ENCODE measurements at regions of chr5 and their contacts with region 1.

Region 1: DNA sequence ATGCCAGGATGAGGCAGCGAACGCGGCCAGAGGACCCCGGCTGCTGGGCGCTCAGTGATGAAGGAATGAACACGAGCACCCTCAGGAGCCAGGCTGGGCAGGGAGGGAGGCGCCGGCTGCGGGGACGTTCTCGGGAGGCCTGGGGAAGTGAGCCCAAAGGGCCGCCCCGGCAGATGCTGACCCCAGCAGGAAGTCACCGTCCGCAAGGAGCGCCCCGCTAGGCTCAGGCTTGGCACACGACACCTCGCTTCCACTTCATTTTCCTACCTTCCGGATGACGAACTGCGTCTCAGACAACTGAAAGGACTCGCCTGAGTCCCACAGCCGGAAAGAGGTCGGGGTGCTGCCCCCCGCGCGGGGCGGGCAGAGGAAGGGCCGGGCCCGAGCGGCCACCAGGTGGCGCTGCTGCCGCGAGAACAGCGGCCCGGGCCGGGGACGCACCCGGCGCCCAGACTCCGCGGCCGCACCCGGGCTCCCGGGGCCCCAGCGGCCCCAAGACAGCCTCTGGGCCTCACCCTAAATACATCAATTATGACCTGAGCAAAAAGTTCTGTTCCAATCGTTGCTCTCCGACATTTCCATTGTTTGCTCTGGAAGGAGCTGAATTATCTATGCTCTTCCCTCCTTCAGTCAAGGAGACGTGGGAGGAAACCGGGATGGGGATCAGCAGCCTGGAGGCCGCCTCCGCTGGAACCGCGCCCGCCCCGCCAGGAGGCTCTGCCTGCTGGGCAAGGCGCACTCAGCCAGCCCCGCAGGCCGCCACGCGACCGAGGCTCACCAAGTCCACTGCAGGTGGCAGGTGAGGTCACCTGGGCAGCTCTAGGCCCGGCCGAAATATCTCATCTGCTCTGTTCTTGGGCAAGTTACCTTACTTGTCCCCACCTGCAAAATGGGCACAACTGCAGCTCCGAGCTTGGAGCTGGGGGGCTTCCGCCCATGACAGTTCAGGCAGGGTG is 107.0 kb downstream of the ZNF354C start:
- DNase-seq: peak in 1 of 2 donors; percentile 68
- H3K4me3 ChIP-seq: peak overlapping the region in 1 of 2 donors; percentile 35
- H3K27ac ChIP-seq: no peak overlapping the region
- H3K4me1 ChIP-seq: peaks cover 0 to 15% (median 7%) of the 10 kb centered on the region in 4 donors
- H3K27me3 ChIP-seq: no peaks in the 10 kb centered on the region
- CTCF ChIP-seq: peak; percentile 83 to 96

Region 2: DNA sequence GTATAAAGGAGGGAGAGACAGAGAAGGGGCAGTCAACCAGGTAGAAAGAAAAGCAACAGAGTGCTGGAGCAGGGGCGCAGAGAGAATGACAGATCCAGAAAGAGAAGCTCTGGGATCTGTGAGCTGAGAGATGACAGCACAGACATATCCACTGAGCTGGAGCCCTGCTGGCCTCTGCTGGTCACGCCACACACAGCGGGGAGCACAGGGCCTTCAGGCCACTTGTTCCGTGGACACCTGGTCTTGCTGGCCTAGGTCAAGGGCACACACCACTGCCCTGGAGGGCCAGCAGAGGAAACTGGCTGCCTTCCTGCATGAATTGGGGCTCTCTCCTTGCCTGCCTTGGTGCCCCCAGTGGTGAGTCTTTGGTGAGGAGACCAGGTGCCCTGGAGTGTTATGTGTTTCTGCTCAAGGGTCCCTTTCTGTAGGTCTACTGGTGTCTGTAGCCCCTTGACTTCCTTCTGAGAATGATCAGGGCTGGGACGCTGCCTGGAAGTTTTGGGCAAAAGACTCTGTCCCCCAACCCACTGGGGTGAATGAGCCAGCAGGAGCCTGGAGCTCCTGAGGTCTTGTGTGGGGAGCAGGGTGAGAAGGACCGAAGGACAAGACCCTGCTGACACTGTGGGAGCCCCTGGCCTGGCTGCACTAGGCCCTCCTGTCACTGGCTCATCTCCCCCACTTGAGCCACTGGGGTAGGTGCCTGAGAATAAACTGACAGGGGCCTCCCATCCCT is 237.3 kb after region 1 on chr5:
- intact Hi-C with region 1: loop called (anchors 5 kb)
- DNase-seq: no peak
- H3K4me3 ChIP-seq: no peak overlapping the region
- H3K27ac ChIP-seq: no peak overlapping the region
- H3K4me1 ChIP-seq: no peaks in the 10 kb centered on the region
- H3K27me3 ChIP-seq: no peaks in the 10 kb centered on the region
- CTCF ChIP-seq: peak; percentile 48 to 57

Region 3: DNA sequence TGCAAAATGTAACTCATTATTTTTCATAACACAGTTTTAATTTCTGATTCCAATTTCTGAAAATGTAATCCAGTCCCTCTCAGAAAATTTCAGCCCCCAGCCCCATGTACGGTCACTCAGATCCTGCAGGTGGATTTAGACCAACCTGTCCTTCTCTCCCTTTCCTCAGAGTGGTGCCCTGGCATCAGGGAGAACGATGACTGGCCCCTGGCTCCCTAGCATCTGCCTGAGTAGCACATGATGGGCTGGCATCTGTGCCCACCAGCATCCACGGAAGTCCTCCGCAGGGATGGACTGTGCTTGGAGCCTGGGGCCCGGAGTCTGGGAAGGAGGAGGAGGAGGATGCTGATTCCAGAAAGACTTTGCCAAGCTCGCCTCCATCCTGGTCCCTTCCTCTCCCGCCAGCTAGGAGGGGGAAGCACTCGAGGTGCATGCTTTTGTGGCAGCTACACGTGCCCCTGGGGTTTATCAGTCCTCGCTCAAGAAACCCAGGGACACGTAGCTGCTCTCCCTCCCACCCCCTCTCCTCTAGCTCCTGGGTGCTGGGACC is 328.8 kb after region 1 on chr5:
- intact Hi-C with region 1: loop called (anchors 2 kb)
- DNase-seq: no peak
- H3K4me3 ChIP-seq: no peak overlapping the region
- H3K27ac ChIP-seq: no peak overlapping the region
- H3K4me1 ChIP-seq: no peaks in the 10 kb centered on the region
- H3K27me3 ChIP-seq: peaks cover 0 to 26% of the 10 kb centered on the region in 2 donors
- CTCF ChIP-seq: no peak

Measured in tibial artery (tissue), 4 donors.